Activated T-helper 1 cell treated with anti-CD3 and anti-CD28 coated beads, Interleukin-12 subunit alpha, Interleukin-12 subunit beta, Interleukin-2, Interleukin-4 antibody, amounts not matched to agents 30 ng/mL and 10 ng/mL and 1 ng/mL, durations not matched to agents 14 hours and 24 hours and 36 hours (primary cell): ENCODE measurements at regions of chr10 and their contacts with region 1.

Region 1: DNA sequence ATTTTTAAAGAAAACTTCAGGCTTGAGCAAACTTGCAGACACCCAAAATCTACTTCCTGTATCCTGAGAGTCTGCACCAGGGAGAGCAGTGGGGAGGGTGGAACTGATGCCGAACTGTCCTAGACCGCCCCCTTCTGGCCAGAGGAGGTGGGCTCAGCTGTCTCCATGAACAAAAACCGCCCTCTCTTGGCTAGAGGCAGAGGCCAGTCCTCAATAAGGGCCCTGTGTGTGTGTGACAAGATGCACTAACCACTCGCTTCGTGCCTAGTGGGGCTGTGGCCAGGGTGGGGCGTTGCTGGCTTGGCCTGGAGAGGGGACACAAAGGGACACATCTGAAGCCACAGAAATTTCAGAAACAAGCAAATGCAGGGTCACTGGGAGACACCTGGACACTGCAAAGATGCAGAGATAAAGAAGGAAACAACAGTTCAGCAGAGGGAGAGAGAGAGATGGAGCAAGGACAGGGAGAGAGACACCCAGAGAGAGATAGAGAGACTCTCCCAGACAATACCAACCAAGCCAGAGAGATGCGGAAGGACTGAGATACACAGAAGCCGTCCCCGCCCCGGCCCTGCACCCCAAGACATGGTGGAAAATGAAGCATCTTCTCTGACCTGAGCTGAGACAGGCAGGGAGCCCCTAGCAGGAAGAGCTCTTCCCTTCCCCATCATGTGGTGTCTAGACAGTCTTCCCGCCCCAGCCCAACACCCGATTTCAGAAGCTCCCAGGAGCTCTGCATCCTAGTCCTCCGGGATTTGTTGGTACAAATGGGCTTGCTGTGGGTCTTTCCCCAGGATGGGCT is 22.7 kb upstream of the FXYD4 start:
- DNase-seq: peak; percentile 80
- H3K4me3 Mint-ChIP-seq: no peak overlapping the region
- H3K27ac Mint-ChIP-seq: peak overlapping the region; percentile 20
- H3K4me1 Mint-ChIP-seq: peaks cover 38% of the 10 kb centered on the region
- H3K27me3 Mint-ChIP-seq: peaks cover 16% of the 10 kb centered on the region

Region 2: DNA sequence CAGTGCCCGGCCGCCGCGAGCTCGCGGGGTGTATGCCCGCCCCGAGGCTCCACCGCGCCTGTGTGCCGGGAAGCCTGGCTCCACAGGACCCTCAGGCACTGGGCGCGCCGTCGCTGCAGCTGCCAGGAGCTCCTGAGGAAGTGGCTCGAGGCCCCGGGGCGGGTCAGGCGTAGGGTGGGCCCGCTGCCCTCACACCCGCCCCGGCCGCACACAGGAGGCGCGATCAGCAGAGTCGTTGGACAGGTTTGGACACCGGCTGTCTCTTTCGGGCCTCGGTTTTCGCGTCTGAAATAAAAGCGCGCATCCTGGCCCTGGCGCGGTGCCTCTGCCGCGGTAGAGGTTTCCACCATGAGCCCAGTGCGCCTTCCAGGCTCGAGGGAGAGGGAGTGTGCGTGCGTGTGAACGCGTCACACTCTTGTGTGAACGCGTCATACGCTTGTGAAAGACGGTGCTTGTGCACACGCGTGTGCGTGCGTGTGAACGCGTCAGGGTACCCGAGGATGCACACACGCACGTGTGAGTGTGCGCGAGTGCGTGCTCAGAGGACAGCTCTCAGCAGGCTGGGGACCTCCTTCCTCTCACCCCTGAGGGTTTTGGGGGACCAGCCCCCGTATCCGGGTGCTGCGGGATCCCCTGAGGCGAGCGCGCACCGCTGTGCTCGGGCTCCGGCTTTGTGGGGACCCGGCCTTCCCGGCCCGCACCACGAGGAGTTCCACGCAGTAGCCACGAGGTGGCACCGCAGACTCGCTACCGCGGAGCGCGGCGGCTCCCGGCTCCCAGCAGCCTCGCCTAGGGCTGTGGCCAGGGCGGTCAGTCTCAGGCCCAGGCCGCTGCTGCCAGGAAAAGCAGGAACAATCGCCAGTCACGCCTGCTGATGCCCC is 482.4 kb before region 1 on chr10:
- intact Hi-C with region 1: loop called (anchors 1 kb)
- DNase-seq: peak; percentile 29
- H3K4me3 Mint-ChIP-seq: no peak overlapping the region
- H3K27ac Mint-ChIP-seq: no peak overlapping the region
- H3K4me1 Mint-ChIP-seq: no peaks in the 10 kb centered on the region
- H3K27me3 Mint-ChIP-seq: peaks cover 27% of the 10 kb centered on the region

Region 3: GRCh38 chr10:43204943-43205671 is 143.6 kb before region 1 on chr10:
- intact Hi-C with region 1: loop called (anchors 1 kb)
- DNase-seq: peak; percentile 36
- H3K4me3 Mint-ChIP-seq: no peak overlapping the region
- H3K27ac Mint-ChIP-seq: no peak overlapping the region
- H3K4me1 Mint-ChIP-seq: no peaks in the 10 kb centered on the region
- H3K27me3 Mint-ChIP-seq: no peaks in the 10 kb centered on the region

Region 4: GRCh38 chr10:43265799-43266721 is 82.7 kb before region 1 on chr10:
- intact Hi-C with region 1: loop called (anchors 1 kb)
- DNase-seq: no peak
- H3K4me3 Mint-ChIP-seq: peak overlapping the region; percentile 80
- H3K27ac Mint-ChIP-seq: no peak overlapping the region
- H3K4me1 Mint-ChIP-seq: no peaks in the 10 kb centered on the region
- H3K27me3 Mint-ChIP-seq: peaks cover 54% of the 10 kb centered on the region

Region 5: GRCh38 chr10:43292755-43293676 is 55.7 kb before region 1 on chr10:
- intact Hi-C with region 1: loop called (anchors 1 kb)
- DNase-seq: no peak
- H3K4me3 Mint-ChIP-seq: peak overlapping the region; percentile 9
- H3K27ac Mint-ChIP-seq: peak overlapping the region; percentile 73
- H3K4me1 Mint-ChIP-seq: peaks cover 86% of the 10 kb centered on the region
- H3K27me3 Mint-ChIP-seq: peaks cover 9% of the 10 kb centered on the region

Region 6: DNA sequence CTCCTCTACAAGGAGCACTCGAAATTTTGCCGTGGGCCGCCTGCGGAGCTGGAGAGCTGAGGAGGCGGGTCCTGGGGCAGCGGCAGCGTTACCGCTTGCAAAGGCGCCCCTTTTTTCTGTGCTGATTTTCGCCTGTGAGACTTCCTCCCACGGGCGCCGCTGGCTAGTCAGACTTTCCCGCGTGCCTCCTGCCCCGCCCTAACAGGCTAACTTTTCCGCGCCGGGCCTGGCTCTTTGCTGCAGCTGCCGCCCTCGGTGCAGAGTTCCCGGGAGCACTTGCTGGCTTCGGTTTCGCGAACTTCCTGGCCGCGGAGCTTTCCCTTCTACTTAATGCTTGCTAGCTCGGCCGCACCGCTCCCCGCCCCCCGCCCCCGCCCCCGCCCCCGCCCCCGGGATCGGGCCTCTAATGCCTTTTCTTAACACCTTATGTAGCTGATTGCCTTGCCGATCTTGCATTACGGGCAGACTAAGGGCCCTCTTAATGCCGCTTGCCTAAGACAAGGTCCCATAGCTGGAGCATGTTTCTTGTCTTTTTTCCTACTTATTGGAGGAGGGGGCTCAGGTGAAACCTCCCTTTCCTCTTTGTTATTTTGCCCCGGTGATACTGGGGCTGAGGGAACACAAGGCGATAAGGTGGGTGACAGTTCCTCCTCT is 43.9 kb before region 1 on chr10:
- intact Hi-C with region 1: no loop called
- DNase-seq: peak; percentile 47
- H3K4me3 Mint-ChIP-seq: peak overlapping the region; percentile 76
- H3K27ac Mint-ChIP-seq: peak overlapping the region; percentile 73
- H3K4me1 Mint-ChIP-seq: peaks cover 62% of the 10 kb centered on the region
- H3K27me3 Mint-ChIP-seq: no peaks in the 10 kb centered on the region

Region 7: DNA sequence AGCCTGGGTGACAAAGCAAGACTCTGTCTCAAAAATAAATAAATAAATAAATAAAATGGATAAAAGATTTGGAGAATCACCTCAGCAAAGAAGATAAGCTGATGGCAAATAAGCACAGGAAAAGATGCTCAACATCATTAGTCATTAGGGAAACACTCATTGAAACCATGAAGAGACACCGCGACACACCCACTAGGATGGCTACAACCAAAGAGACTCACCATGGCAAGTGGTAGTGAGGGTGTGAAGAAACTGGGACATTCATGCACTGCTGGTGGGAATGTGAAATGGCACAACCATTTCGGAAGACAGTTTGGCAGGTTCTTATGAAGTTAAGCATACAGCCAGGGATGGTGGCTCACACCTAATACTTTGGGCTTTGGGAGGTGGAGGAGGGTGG is 15.1 kb before region 1 on chr10:
- intact Hi-C with region 1: loop called (anchors 2 kb)
- DNase-seq: no peak
- H3K4me3 Mint-ChIP-seq: no peak overlapping the region
- H3K27ac Mint-ChIP-seq: peak overlapping the region; percentile 40
- H3K4me1 Mint-ChIP-seq: peaks cover 54% of the 10 kb centered on the region
- H3K27me3 Mint-ChIP-seq: peaks cover 8% of the 10 kb centered on the region

Region 8: GRCh38 chr10:43461950-43462349 is 113.2 kb after region 1 on chr10:
- intact Hi-C with region 1: loop called (anchors 1 kb)
- DNase-seq: peak; percentile 33
- H3K4me3 Mint-ChIP-seq: no peak overlapping the region
- H3K27ac Mint-ChIP-seq: no peak overlapping the region
- H3K4me1 Mint-ChIP-seq: peaks cover 21% of the 10 kb centered on the region
- H3K27me3 Mint-ChIP-seq: peaks cover 1% of the 10 kb centered on the region

Region 9: GRCh38 chr10:43574001-43574892 is 225.5 kb after region 1 on chr10 and contains the start of gene ZNF239:
- intact Hi-C with region 1: no loop called
- DNase-seq: peak; percentile 48
- H3K4me3 Mint-ChIP-seq: peak within 1 kb of the TSS; percentile 57
- H3K27ac Mint-ChIP-seq: peak within 1 kb of the TSS; percentile 45
- H3K4me1 Mint-ChIP-seq: peaks cover 17% of the 10 kb centered on the region
- H3K27me3 Mint-ChIP-seq: no peaks in the 10 kb centered on the region
- total RNA-seq, gene ZNF239: 1.4 and 1.7 TPM in 2 replicates

Region 10: GRCh38 chr10:43728425-43728824 is 379.7 kb after region 1 on chr10:
- intact Hi-C with region 1: no loop called
- DNase-seq: no peak
- H3K4me3 Mint-ChIP-seq: no peak overlapping the region
- H3K27ac Mint-ChIP-seq: no peak overlapping the region
- H3K4me1 Mint-ChIP-seq: no peaks in the 10 kb centered on the region
- H3K27me3 Mint-ChIP-seq: peaks cover 3% of the 10 kb centered on the region